Endothelial cell of umbilical vein (primary cell): ENCODE measurements at regions of chr1 and their contacts with region 1.

Region 1: GRCh38 chr1:196407358-196408051 is 200.7 kb downstream of the KCNT2 start:
- DNase-seq: peak; percentile 86
- H3K4me3 ChIP-seq: no peak overlapping the region
- H3K27ac ChIP-seq: peak overlapping the region; percentile 37
- H3K4me1 ChIP-seq: peaks cover 33% of the 10 kb centered on the region
- H3K27me3 ChIP-seq: no peaks in the 10 kb centered on the region
- CTCF ChIP-seq: no peak
- POLR2A ChIP-seq: no peak

Region 2: GRCh38 chr1:196366817-196367495 is 40.5 kb before region 1 on chr1:
- CTCF ChIA-PET with region 1: no interaction called
- POLR2A ChIA-PET with region 1: no interaction called
- dilution Hi-C with region 1: no loop called
- intact Hi-C with region 1: loop called (anchors 2 kb)
- DNase-seq: peak; percentile 65
- H3K4me3 ChIP-seq: no peak overlapping the region
- H3K27ac ChIP-seq: peak overlapping the region; percentile 7
- H3K4me1 ChIP-seq: peaks cover 11% of the 10 kb centered on the region
- H3K27me3 ChIP-seq: no peaks in the 10 kb centered on the region
- CTCF ChIP-seq: no peak
- POLR2A ChIP-seq: no peak

Region 3: GRCh38 chr1:196438329-196438728 is 30.8 kb after region 1 on chr1:
- CTCF ChIA-PET with region 1: no interaction called
- POLR2A ChIA-PET with region 1: no interaction called
- dilution Hi-C with region 1: no loop called
- intact Hi-C with region 1: no loop called
- DNase-seq: no peak
- H3K4me3 ChIP-seq: no peak overlapping the region
- H3K27ac ChIP-seq: no peak overlapping the region
- H3K4me1 ChIP-seq: no peaks in the 10 kb centered on the region
- H3K27me3 ChIP-seq: no peaks in the 10 kb centered on the region
- CTCF ChIP-seq: no peak
- POLR2A ChIP-seq: no peak